Ascending aorta (tissue), 2 donors: ENCODE measurements at regions of chr15 and their contacts with region 1.

Region 1: GRCh38 chr15:90387537-90388461 is at the start of gene IQGAP1:
- DNase-seq: peak; percentile 90 to 99
- H3K4me3 ChIP-seq: peak within 1 kb of the TSS; percentile 90 to 99
- H3K27ac ChIP-seq: peak within 1 kb of the TSS; percentile 98 to 100
- H3K4me1 ChIP-seq: peaks cover 16 to 17% of the 10 kb centered on the region in 2 donors
- H3K27me3 ChIP-seq: no peaks in the 10 kb centered on the region
- CTCF ChIP-seq: no peak
- total RNA-seq, gene IQGAP1: 99.1 TPM

Region 2: GRCh38 chr15:90352109-90352893 is 35.5 kb before region 1 on chr15 and contains the start of gene ZNF774:
- intact Hi-C with region 1: loop called (anchors 1 kb)
- DNase-seq: peak; percentile 84 to 96
- H3K4me3 ChIP-seq: peak within 1 kb of the TSS; percentile 59 to 94
- H3K27ac ChIP-seq: peak within 1 kb of the TSS; percentile 45 to 87
- H3K4me1 ChIP-seq: no peaks in the 10 kb centered on the region
- H3K27me3 ChIP-seq: no peaks in the 10 kb centered on the region
- CTCF ChIP-seq: no peak
- total RNA-seq, gene ZNF774: 0.21 TPM

Region 3: GRCh38 chr15:90362936-90363212 is 24.9 kb before region 1 on chr15:
- intact Hi-C with region 1: loop called (anchors 1 kb)
- DNase-seq: no peak
- H3K4me3 ChIP-seq: no peak overlapping the region
- H3K27ac ChIP-seq: peak overlapping the region in 1 of 2 donors; percentile 90
- H3K4me1 ChIP-seq: peaks cover 4 to 28% of the 10 kb centered on the region in 2 donors
- H3K27me3 ChIP-seq: no peaks in the 10 kb centered on the region
- CTCF ChIP-seq: no peak

Region 4: GRCh38 chr15:90400406-90401314 is 12.9 kb after region 1 on chr15:
- intact Hi-C with region 1: loop called (anchors 1 kb)
- DNase-seq: peak; percentile 44 to 91
- H3K4me3 ChIP-seq: peak overlapping the region; percentile 27 to 36
- H3K27ac ChIP-seq: peak overlapping the region; percentile 89 to 91
- H3K4me1 ChIP-seq: peaks cover 24 to 82% of the 10 kb centered on the region in 2 donors
- H3K27me3 ChIP-seq: no peaks in the 10 kb centered on the region
- CTCF ChIP-seq: no peak

Region 5: GRCh38 chr15:90463381-90463780 is 75.6 kb after region 1 on chr15:
- intact Hi-C with region 1: loop called (anchors 2 kb)
- DNase-seq: no peak
- H3K4me3 ChIP-seq: no peak overlapping the region
- H3K27ac ChIP-seq: peak overlapping the region; percentile 72 to 79
- H3K4me1 ChIP-seq: peaks cover 22 to 46% of the 10 kb centered on the region in 2 donors
- H3K27me3 ChIP-seq: no peaks in the 10 kb centered on the region
- CTCF ChIP-seq: peak in 2 of 3 experiments; percentile 25 to 26

Region 6: DNA sequence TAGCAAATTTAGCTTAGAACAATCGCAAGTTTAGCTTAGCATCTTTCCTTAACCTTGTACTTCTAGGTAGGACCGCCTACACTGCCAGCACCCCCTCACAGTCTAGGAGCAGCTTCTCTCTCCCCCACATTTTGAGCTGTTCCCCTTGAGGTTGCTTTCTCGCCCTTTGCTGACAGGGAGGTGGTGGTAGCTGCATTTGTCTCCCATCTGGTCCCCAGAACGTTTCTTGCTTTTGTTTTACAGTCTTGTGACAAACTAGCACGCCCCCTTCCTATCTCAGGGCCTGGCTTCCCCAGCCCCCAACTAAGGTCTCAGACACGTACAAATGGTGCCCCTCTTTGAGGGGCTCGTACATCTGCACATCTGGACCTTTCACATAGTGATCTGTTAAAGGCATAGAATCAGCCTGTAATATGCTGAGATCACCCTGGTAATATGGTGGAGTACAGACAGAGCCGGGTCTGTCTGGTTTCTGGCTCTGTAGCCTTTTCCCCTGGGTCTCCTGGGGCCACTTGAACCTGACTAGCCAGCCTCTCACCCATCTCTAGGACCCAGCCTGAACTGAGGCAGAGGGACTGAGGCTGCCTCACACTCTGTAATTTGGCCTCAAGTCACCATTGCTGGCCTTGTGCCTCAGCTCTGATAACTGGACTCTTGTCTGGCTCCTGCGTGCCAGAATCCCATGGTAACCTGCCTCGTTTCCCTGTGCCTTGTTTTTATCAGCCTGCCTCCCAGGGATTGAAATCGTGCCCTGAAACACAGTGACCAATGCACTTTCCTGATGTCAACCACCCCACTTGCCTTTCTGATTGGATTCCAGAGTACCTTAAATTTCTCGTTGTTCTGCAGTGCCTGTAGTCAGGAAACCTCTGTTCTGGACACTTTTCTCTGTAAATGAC is 169.6 kb after region 1 on chr15:
- intact Hi-C with region 1: loop called (anchors 5 kb)
- DNase-seq: peak; percentile 73 to 97
- H3K4me3 ChIP-seq: peak overlapping the region in 1 of 2 donors; percentile 21
- H3K27ac ChIP-seq: peak overlapping the region; percentile 84 to 87
- H3K4me1 ChIP-seq: peaks cover 34 to 67% of the 10 kb centered on the region in 2 donors
- H3K27me3 ChIP-seq: no peaks in the 10 kb centered on the region
- CTCF ChIP-seq: no peak